ENCODE measurements at regions of chr18 and their contacts with region 1.

Region 1: GRCh38 chr18:55422456-55423180 is 165.4 kb downstream of the TCF4 start:
- DNase-seq: peak in 2 of 10 donors; percentile 39 to 52
- H3K4me3 ChIP-seq: peak overlapping the region; percentile 34 to 76 (median 59)
- H3K27ac ChIP-seq: peak overlapping the region; percentile 68 to 99 (median 93)
- H3K27me3 ChIP-seq: no peaks in the 10 kb centered on the region
- CTCF ChIP-seq: no peak

Region 2: GRCh38 chr18:55458456-55459203 is 36.0 kb after region 1 on chr18:
- intact Hi-C with region 1: loop called in 1 of 2 experiments (anchors 5 kb)
- DNase-seq: peak in 2 of 10 donors; percentile 65 to 72
- H3K4me3 ChIP-seq: peak overlapping the region in 57 of 59 donors; percentile 4 to 65 (median 43)
- H3K27ac ChIP-seq: peak overlapping the region; percentile 67 to 97 (median 91)
- H3K27me3 ChIP-seq: no peaks in the 10 kb centered on the region
- CTCF ChIP-seq: no peak

Region 3: DNA sequence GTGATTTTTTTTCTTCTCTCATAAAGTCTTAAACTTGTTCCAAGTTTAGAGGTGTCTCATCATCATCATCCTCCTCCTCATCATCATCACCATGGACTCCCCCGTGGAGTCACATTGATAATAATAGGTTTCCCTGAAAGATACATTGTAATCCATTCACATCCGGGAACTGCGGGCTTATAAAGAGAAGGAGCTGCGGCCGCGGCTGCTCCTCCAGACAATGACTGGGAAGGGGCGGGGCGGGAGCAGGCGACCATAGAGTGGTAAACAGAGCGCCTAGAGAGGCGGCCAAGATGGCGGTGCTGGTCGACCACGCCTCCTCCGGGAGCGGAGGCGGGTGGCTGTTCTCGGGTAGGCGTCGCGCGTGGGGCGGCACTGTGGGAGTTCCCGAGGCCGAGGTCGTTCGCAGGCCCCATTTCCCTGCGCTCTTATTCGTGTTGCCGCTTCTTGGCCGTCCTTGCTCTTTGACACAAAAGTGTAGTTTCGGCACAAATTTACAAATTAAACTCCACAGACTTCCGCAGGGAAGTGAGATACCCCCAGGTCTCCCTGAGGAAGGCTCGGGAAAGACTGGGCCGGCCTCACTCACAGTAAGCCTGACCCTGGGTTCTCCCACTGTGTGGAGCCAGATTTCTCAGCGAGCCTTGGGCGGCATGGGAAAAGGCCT is 167.1 kb after region 1 on chr18:
- intact Hi-C with region 1: loop called (anchors 1 kb)
- DNase-seq: peak; percentile 92 to 96 (median 94)
- H3K4me3 ChIP-seq: peak overlapping the region; percentile 50 to 86 (median 72)
- H3K27ac ChIP-seq: peak overlapping the region; percentile 71 to 99 (median 96)
- H3K27me3 ChIP-seq: no peaks in the 10 kb centered on the region
- CTCF ChIP-seq: peak in 50 of 56 donors; percentile 4 to 63 (median 46)

Measured in dorsolateral prefrontal cortex (tissue), 120 donors.